MCF 10A (cell line): ENCODE measurements at regions of chr5 and their contacts with region 1.

Region 1: GRCh38 chr5:119470851-119471451 is 18.7 kb downstream of the HSD17B4 start:
- DNase-seq: peak; percentile 65
- H3K4me3 Mint-ChIP-seq: no peak overlapping the region
- H3K27ac Mint-ChIP-seq: peak overlapping the region; percentile 39
- H3K4me1 Mint-ChIP-seq: no peaks in the 10 kb centered on the region
- H3K27me3 Mint-ChIP-seq: no peaks in the 10 kb centered on the region
- CTCF ChIP-seq: peak; percentile 77

Region 2: DNA sequence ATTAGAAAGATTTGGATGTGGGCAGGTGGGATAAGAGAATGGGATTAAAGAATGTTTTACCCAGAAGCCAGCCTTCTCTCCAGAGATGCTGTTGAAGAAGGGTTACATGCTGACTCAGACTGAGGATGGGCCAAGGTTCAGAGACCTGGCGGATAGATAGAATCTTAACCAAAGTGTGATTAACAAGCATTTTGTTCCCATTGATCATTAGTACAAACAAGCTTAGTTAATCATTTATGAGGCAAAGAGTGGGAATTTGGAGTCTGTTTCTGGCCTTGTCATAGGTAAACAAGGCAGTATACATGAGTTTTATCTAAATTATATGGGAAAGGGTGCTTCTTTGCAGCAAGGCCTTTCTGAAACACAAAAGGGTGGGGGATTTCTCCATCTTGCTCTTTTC is 461.8 kb before region 1 on chr5:
- CTCF ChIA-PET with region 1: no interaction called
- POLR2A ChIA-PET with region 1: no interaction called
- intact Hi-C with region 1: no loop called
- DNase-seq: no peak
- H3K4me3 Mint-ChIP-seq: no peak overlapping the region
- H3K27ac Mint-ChIP-seq: no peak overlapping the region
- H3K4me1 Mint-ChIP-seq: no peaks in the 10 kb centered on the region
- H3K27me3 Mint-ChIP-seq: no peaks in the 10 kb centered on the region
- CTCF ChIP-seq: no peak

Region 3: GRCh38 chr5:119452373-119453039 is 18.4 kb before region 1 on chr5 and contains the start of gene HSD17B4:
- CTCF ChIA-PET with region 1: interaction called, 13 read pairs
- POLR2A ChIA-PET with region 1: interaction called, 3 read pairs
- intact Hi-C with region 1: no loop called
- DNase-seq: peak; percentile 95
- H3K4me3 Mint-ChIP-seq: peak within 1 kb of the TSS; percentile 87
- H3K27ac Mint-ChIP-seq: peak within 1 kb of the TSS; percentile 82
- H3K4me1 Mint-ChIP-seq: peaks cover 13% of the 10 kb centered on the region
- H3K27me3 Mint-ChIP-seq: no peaks in the 10 kb centered on the region
- CTCF ChIP-seq: no peak
- total RNA-seq, gene HSD17B4: 163 and 169 TPM in 2 replicates

Region 4: GRCh38 chr5:119458911-119459632 is 11.9 kb before region 1 on chr5:
- CTCF ChIA-PET with region 1: interaction called, 13 read pairs
- POLR2A ChIA-PET with region 1: interaction called, 6 read pairs
- intact Hi-C with region 1: no loop called
- DNase-seq: no peak
- H3K4me3 Mint-ChIP-seq: no peak overlapping the region
- H3K27ac Mint-ChIP-seq: no peak overlapping the region
- H3K4me1 Mint-ChIP-seq: peaks cover 6% of the 10 kb centered on the region
- H3K27me3 Mint-ChIP-seq: no peaks in the 10 kb centered on the region
- CTCF ChIP-seq: no peak

Region 5: GRCh38 chr5:119631660-119632059 is 160.7 kb after region 1 on chr5:
- CTCF ChIA-PET with region 1: no interaction called
- POLR2A ChIA-PET with region 1: no interaction called
- intact Hi-C with region 1: no loop called
- DNase-seq: no peak
- H3K4me3 Mint-ChIP-seq: no peak overlapping the region
- H3K27ac Mint-ChIP-seq: no peak overlapping the region
- H3K4me1 Mint-ChIP-seq: peaks cover 6% of the 10 kb centered on the region
- H3K27me3 Mint-ChIP-seq: no peaks in the 10 kb centered on the region
- CTCF ChIP-seq: no peak

Region 6: GRCh38 chr5:119743927-119744326 is 273.0 kb after region 1 on chr5:
- CTCF ChIA-PET with region 1: interaction called, 4 read pairs
- POLR2A ChIA-PET with region 1: no interaction called
- intact Hi-C with region 1: loop called (anchors 1 kb)
- DNase-seq: peak; percentile 89
- H3K4me3 Mint-ChIP-seq: no peak overlapping the region
- H3K27ac Mint-ChIP-seq: no peak overlapping the region
- H3K4me1 Mint-ChIP-seq: no peaks in the 10 kb centered on the region
- H3K27me3 Mint-ChIP-seq: no peaks in the 10 kb centered on the region
- CTCF ChIP-seq: peak; percentile 58

Region 7: GRCh38 chr5:119750887-119751733 is 280.2 kb after region 1 on chr5:
- CTCF ChIA-PET with region 1: interaction called, 10 read pairs
- POLR2A ChIA-PET with region 1: no interaction called
- intact Hi-C with region 1: no loop called
- DNase-seq: no peak
- H3K4me3 Mint-ChIP-seq: no peak overlapping the region
- H3K27ac Mint-ChIP-seq: no peak overlapping the region
- H3K4me1 Mint-ChIP-seq: peaks cover 11% of the 10 kb centered on the region
- H3K27me3 Mint-ChIP-seq: no peaks in the 10 kb centered on the region
- CTCF ChIP-seq: no peak

Region 8: DNA sequence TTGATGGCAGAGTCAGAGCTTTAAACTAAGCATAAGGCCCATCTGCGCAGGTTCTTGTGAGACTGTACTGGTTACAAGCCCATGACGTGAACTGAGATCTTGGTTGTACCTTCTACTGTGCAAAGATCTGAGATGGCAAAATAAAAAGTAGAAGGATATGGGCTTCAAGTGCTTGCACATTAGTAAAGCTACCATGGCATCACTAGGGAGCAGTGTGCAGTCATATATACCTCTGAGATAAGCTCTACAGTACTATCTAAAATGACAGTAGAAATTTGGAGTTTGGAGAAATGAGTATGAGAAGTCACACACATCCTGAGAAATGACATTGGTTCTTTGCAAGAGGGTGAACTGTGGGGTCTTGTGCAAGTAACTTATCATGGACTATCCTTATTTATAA is 584.9 kb after region 1 on chr5:
- CTCF ChIA-PET with region 1: no interaction called
- POLR2A ChIA-PET with region 1: no interaction called
- intact Hi-C with region 1: loop called (anchors 2 kb)
- DNase-seq: peak; percentile 65
- H3K4me3 Mint-ChIP-seq: no peak overlapping the region
- H3K27ac Mint-ChIP-seq: no peak overlapping the region
- H3K4me1 Mint-ChIP-seq: no peaks in the 10 kb centered on the region
- H3K27me3 Mint-ChIP-seq: no peaks in the 10 kb centered on the region
- CTCF ChIP-seq: peak; percentile 43

Region 9: GRCh38 chr5:120463991-120464626 is 993.2 kb after region 1 on chr5 and contains the start of gene PRR16:
- CTCF ChIA-PET with region 1: no interaction called
- POLR2A ChIA-PET with region 1: no interaction called
- intact Hi-C with region 1: loop called (anchors 1 kb)
- DNase-seq: peak; percentile 79
- H3K4me3 Mint-ChIP-seq: peak within 1 kb of the TSS; percentile 85
- H3K27ac Mint-ChIP-seq: peak within 1 kb of the TSS; percentile 6
- H3K4me1 Mint-ChIP-seq: peaks cover 39% of the 10 kb centered on the region
- H3K27me3 Mint-ChIP-seq: no peaks in the 10 kb centered on the region
- CTCF ChIP-seq: no peak
- total RNA-seq, gene PRR16: 11.9 and 18.9 TPM in 2 replicates